Endothelial cell of umbilical vein (primary cell): ENCODE measurements at regions of chr1 and their contacts with region 1.

Region 1: GRCh38 chr1:100866041-100866900 is 28.4 kb downstream of the EXTL2 start:
- DNase-seq: peak; percentile 78
- H3K4me3 ChIP-seq: peak overlapping the region in 1 of 3 experiments; percentile 33
- H3K27ac ChIP-seq: peak overlapping the region; percentile 70
- H3K4me1 ChIP-seq: peaks cover 17% of the 10 kb centered on the region
- H3K27me3 ChIP-seq: no peaks in the 10 kb centered on the region
- CTCF ChIP-seq: peak; percentile 44 to 49
- POLR2A ChIP-seq: no peak

Region 2: DNA sequence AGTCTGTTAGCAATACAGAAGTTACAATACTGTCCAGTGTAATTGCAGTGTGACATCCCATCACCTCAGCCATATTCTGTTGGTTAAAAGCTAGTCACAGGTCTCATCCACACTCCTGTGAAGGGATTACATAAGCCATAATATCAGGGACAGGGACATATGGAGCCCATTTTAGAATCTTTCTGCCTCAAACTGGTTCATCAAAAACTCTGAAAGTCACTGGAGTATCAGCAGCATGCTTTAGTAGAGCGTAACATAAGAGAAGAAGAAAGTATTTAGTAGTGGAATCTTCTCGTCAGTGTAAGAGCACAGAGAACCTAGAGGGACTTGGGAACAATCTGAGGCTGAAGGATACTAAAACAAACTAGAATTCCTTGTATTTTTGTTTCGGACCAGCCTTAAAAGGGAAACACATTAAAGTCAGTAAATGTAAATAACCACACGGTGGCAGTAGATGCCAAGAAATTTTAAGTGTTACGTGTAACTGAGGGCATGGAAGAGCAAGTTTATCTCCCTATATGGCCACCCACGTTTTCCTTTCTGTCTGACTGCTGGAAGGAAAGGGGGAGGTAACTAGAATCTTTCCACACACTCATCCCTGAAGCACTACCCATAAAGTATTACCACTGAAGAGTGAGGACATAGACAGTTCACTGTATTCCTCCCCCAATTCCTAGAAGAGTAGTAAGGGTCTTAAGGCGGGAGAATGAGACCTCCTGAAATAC is 1057.7 kb before region 1 on chr1:
- CTCF ChIA-PET with region 1: interaction called, 8 read pairs
- POLR2A ChIA-PET with region 1: no interaction called
- dilution Hi-C with region 1: no loop called
- intact Hi-C with region 1: loop called (anchors 1 kb)
- DNase-seq: peak; percentile 87
- H3K4me3 ChIP-seq: peak overlapping the region in 1 of 3 experiments; percentile 15
- H3K27ac ChIP-seq: no peak overlapping the region
- H3K4me1 ChIP-seq: peaks cover 8% of the 10 kb centered on the region
- H3K27me3 ChIP-seq: peaks cover 15 to 21% of the 10 kb centered on the region in 2 experiments
- CTCF ChIP-seq: peak; percentile 23 to 41
- POLR2A ChIP-seq: no peak

Region 3: DNA sequence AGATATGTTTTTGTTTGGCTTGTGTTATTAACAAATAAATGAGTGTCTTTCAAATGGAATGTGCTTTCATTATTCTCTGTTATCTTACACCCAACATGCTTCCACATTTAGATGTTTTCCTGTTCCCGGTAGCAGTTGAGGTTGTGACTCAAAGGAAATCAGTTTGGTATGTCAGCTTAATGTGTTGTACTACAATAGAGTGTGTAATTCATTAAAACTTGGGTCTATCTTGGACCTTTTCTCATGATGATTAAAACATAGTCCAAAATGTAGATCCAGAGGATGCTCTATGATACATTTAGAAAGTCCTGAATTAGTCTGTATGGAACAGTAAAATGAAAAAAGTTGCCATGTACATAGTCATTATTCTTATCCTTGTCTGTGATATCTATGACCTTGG is 573.6 kb before region 1 on chr1:
- CTCF ChIA-PET with region 1: interaction called, 6 read pairs
- POLR2A ChIA-PET with region 1: no interaction called
- dilution Hi-C with region 1: no loop called
- intact Hi-C with region 1: loop called (anchors 10 kb)
- DNase-seq: peak; percentile 96
- H3K4me3 ChIP-seq: no peak overlapping the region
- H3K27ac ChIP-seq: peak overlapping the region; percentile 97
- H3K4me1 ChIP-seq: peaks cover 43% of the 10 kb centered on the region
- H3K27me3 ChIP-seq: no peaks in the 10 kb centered on the region
- CTCF ChIP-seq: no peak
- POLR2A ChIP-seq: peak; percentile 82

Region 4: GRCh38 chr1:100469578-100469977 is 396.7 kb before region 1 on chr1:
- CTCF ChIA-PET with region 1: interaction called, 252 read pairs
- POLR2A ChIA-PET with region 1: no interaction called
- dilution Hi-C with region 1: loop called (anchors 10 kb)
- intact Hi-C with region 1: no loop called
- DNase-seq: no peak
- H3K4me3 ChIP-seq: no peak overlapping the region
- H3K27ac ChIP-seq: no peak overlapping the region
- H3K4me1 ChIP-seq: no peaks in the 10 kb centered on the region
- H3K27me3 ChIP-seq: no peaks in the 10 kb centered on the region
- CTCF ChIP-seq: no peak
- POLR2A ChIP-seq: no peak

Region 5: GRCh38 chr1:100597061-100597741 is 269.1 kb before region 1 on chr1:
- CTCF ChIA-PET with region 1: no interaction called
- POLR2A ChIA-PET with region 1: no interaction called
- dilution Hi-C with region 1: loop called (anchors 25 kb)
- intact Hi-C with region 1: loop called (anchors 2 kb)
- DNase-seq: peak; percentile 95
- H3K4me3 ChIP-seq: no peak overlapping the region
- H3K27ac ChIP-seq: peak overlapping the region; percentile 93
- H3K4me1 ChIP-seq: peaks cover 28% of the 10 kb centered on the region
- H3K27me3 ChIP-seq: no peaks in the 10 kb centered on the region
- CTCF ChIP-seq: no peak
- POLR2A ChIP-seq: no peak

Region 6: DNA sequence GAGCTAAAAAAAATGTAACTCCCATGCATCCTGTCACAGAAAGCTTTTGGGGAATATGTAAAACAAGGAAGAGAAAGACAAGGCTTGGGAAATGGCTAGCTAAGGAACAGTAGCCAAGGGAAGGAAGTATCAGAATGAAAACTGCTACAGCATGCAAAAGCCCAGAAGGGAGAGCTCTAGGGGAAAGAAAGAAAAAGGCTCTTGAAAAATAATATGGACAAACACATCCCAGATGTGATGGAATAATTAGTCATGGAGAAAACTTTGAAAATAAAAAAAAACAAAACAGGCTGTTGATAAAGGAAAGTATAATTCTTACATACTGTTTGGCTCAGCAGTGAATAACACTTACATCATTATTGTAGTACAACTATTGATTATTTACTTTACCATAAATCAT is 194.7 kb before region 1 on chr1:
- CTCF ChIA-PET with region 1: interaction called, 10 read pairs
- POLR2A ChIA-PET with region 1: no interaction called
- dilution Hi-C with region 1: no loop called
- intact Hi-C with region 1: no loop called
- DNase-seq: peak; percentile 50
- H3K4me3 ChIP-seq: no peak overlapping the region
- H3K27ac ChIP-seq: no peak overlapping the region
- H3K4me1 ChIP-seq: no peaks in the 10 kb centered on the region
- H3K27me3 ChIP-seq: no peaks in the 10 kb centered on the region
- CTCF ChIP-seq: no peak
- POLR2A ChIP-seq: no peak

Region 7: GRCh38 chr1:100834777-100835660 is 31.3 kb before region 1 on chr1:
- CTCF ChIA-PET with region 1: interaction called, 7 read pairs
- POLR2A ChIA-PET with region 1: no interaction called
- dilution Hi-C with region 1: no loop called
- intact Hi-C with region 1: loop called (anchors 1 kb)
- DNase-seq: peak; percentile 26
- H3K4me3 ChIP-seq: no peak overlapping the region
- H3K27ac ChIP-seq: peak overlapping the region; percentile 95
- H3K4me1 ChIP-seq: peaks cover 22% of the 10 kb centered on the region
- H3K27me3 ChIP-seq: no peaks in the 10 kb centered on the region
- CTCF ChIP-seq: peak in 1 of 2 donors; percentile 13
- POLR2A ChIP-seq: no peak

Region 8: DNA sequence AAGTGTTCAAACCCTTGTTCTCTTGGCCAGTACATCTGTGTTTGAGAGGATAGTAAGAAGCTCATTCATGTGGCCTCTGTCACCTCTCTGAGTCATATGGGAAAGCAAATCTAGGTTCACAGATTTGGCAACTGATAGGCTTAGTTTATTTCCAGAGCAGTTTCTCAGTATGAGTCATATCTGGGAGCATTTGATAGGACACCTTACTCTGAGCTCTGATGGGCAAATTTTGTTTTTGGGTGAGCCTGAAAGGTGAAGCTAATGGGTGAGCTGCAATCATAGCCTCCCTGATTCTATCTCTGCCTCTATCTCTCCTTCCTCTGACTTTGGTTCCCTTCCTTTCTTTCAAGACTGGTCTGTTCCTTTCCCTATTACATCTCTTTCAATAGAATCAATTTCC is 505.0 kb after region 1 on chr1:
- CTCF ChIA-PET with region 1: no interaction called
- POLR2A ChIA-PET with region 1: no interaction called
- dilution Hi-C with region 1: no loop called
- intact Hi-C with region 1: no loop called
- DNase-seq: peak; percentile 74
- H3K4me3 ChIP-seq: no peak overlapping the region
- H3K27ac ChIP-seq: no peak overlapping the region
- H3K4me1 ChIP-seq: peaks cover 20% of the 10 kb centered on the region
- H3K27me3 ChIP-seq: no peaks in the 10 kb centered on the region
- CTCF ChIP-seq: no peak
- POLR2A ChIP-seq: no peak

Region 9: GRCh38 chr1:101520302-101520701 is 654.0 kb after region 1 on chr1:
- CTCF ChIA-PET with region 1: no interaction called
- POLR2A ChIA-PET with region 1: no interaction called
- dilution Hi-C with region 1: no loop called
- intact Hi-C with region 1: no loop called
- DNase-seq: peak; percentile 57
- H3K4me3 ChIP-seq: no peak overlapping the region
- H3K27ac ChIP-seq: no peak overlapping the region
- H3K4me1 ChIP-seq: no peaks in the 10 kb centered on the region
- H3K27me3 ChIP-seq: peaks cover 2 to 3% of the 10 kb centered on the region in 2 experiments
- CTCF ChIP-seq: peak; percentile 62 to 71
- POLR2A ChIP-seq: no peak

Region 10: GRCh38 chr1:102191723-102192122 is 1325.5 kb after region 1 on chr1:
- CTCF ChIA-PET with region 1: no interaction called
- POLR2A ChIA-PET with region 1: no interaction called
- dilution Hi-C with region 1: no loop called
- intact Hi-C with region 1: no loop called
- DNase-seq: peak; percentile 43
- H3K4me3 ChIP-seq: no peak overlapping the region
- H3K27ac ChIP-seq: no peak overlapping the region
- H3K4me1 ChIP-seq: no peaks in the 10 kb centered on the region
- H3K27me3 ChIP-seq: no peaks in the 10 kb centered on the region
- CTCF ChIP-seq: peak; percentile 15 to 25
- POLR2A ChIP-seq: no peak